ENCODE measurements at regions of chr7 and their contacts with region 1.

Region 1: DNA sequence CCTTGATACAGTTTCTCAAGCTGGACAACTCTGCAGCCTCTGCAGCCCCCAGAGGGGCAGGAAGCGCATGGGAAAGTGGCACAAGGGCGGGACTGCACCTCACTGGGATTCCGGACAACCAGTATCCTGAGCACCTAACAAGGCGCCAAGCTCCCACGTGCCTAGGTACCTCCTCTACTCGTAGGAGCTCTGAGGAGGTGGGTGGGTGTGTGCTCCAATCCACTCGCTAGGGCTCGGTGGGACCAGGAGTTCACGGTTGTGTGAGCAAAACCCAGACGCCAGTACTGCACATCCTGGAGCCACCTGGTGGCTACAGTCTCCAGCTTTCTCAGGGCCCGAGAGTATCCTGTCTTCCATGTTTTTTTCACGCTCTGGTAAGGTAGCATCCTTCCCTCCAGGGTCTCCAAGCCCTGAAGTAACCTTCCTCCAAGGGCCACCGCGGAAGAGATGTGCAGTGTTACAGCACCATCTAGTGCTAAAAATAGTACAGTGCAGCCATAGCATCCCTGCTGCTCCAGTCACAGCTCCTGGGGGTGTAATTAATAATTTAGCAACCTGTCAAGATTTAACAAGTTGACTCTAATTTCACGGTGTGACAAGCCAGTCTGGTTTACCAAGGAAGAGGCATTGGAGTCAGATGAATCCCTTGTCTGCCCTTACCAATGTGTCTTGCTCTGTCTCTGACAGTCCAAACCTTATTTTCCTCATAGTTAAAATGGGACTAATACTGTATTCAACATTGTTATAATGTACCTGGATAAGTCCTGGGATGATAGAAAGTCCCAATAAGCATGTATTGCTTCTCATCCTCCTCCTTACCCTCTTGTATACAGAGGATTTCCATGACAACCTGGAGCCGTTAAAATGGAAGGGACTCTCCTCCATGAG is 70.4 kb downstream of the HERPUD2 start:
- DNase-seq: peak; percentile 65 to 72 (median 70)
- ATAC-seq: peak; percentile 97
- H3K4me3 ChIP-seq: no peak overlapping the region
- H3K27ac ChIP-seq: no peak overlapping the region
- H3K4me1 ChIP-seq: no peaks in the 10 kb centered on the region
- H3K27me3 ChIP-seq: peaks cover 2 to 8% of the 10 kb centered on the region in 2 experiments; a peak in 2 of 5 replicates
- CTCF ChIP-seq: peak; percentile 81 to 89 (median 88)
- EP300 ChIP-seq: no peak
- POLR2A ChIP-seq: no peak
- RAD21 ChIP-seq: peak; percentile 78 to 84

Region 2: GRCh38 chr7:34823640-34824258 is 800.8 kb before region 1 on chr7:
- CTCF ChIA-PET with region 1: no interaction called
- POLR2A ChIA-PET with region 1: no interaction called
- in situ Hi-C with region 1: no loop called
- intact Hi-C with region 1: loop called (anchors 10 kb)
- DNase-seq: peak; percentile 62 to 71 (median 65)
- ATAC-seq: peak; percentile 87
- H3K4me3 ChIP-seq: no peak overlapping the region
- H3K27ac ChIP-seq: no peak overlapping the region
- H3K4me1 ChIP-seq: no peaks in the 10 kb centered on the region
- H3K27me3 ChIP-seq: no peaks in the 10 kb centered on the region; a peak in 1 of 5 replicates
- CTCF ChIP-seq: peak; percentile 73 to 83 (median 74)
- EP300 ChIP-seq: no peak
- POLR2A ChIP-seq: no peak
- RAD21 ChIP-seq: peak; percentile 69 to 72

Region 3: DNA sequence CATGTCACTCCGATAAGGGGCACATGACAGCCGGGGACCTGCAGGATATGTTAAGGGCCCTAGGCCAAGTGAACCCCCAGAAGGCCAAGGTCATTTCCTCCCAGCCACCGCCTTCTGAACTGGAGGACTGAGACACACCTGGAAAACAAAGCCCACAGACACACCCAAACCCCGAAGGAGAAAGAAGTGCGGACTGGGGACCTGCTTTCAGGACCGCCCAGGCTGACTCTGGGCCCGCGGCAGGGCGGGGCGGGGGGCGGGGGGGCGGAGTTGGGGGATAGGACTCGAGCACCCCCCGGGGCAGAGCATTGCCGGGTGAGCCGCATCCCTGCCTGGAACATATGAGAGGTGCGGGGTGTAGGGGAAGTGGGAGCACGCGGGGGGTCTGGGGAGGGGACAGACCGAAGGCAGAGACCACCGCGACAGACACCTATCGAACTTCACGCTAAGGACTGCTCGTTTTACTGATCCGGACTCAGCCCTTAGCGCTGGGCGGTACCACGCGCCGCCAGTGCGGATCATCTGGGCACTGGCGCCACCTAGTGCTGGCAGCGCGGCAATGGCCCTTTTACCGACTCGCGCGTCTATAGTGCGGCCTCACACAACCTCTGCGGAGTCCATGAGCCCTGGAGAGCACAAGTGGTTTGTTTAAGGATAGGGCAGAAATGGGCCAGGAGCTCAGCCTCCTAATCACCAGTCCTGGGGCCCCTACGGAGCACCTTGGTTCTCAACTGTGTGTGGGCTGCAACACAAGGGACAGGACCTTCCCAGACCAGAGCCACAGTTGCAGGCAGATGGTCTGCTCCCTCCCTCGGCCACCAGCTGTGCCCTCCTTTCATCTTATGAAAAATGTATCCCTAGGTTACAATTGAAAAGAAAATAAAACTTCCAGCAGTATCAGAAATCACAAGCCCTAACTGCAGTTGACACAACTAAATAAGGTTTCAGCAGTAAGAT is 87.2 kb before region 1 on chr7:
- CTCF ChIA-PET with region 1: no interaction called
- POLR2A ChIA-PET with region 1: no interaction called
- in situ Hi-C with region 1: no loop called
- intact Hi-C with region 1: loop called (anchors 5 kb)
- DNase-seq: peak; percentile 82 to 86 (median 84)
- ATAC-seq: peak; percentile 100
- H3K4me3 ChIP-seq: 0 out of 2 replicates have a peak overlapping the region, but pooled peaks have one; percentile 18
- H3K27ac ChIP-seq: no peak overlapping the region
- H3K4me1 ChIP-seq: peaks cover 0 to 5% of the 10 kb centered on the region in 2 experiments; a peak in 1 of 5 replicates
- H3K27me3 ChIP-seq: peaks cover 9 to 21% of the 10 kb centered on the region in 2 experiments; a peak in 4 of 5 replicates
- CTCF ChIP-seq: peak; percentile 90 to 93 (median 91)
- EP300 ChIP-seq: no peak
- POLR2A ChIP-seq: no peak
- RAD21 ChIP-seq: peak; percentile 89 to 91